Cardiac septum (tissue), 1 donor: ENCODE measurements at regions of chr9 and their contacts with region 1.

Region 1: GRCh38 chr9:35553670-35554543 is 51.2 kb upstream of the TESK1 start:
- DNase-seq: no peak

Region 2: GRCh38 chr9:35116898-35117551 is 436.9 kb before region 1 on chr9:
- intact Hi-C with region 1: loop called (anchors 10 kb)
- DNase-seq: peak; percentile 94

Region 3: GRCh38 chr9:35489313-35490154 is 64.4 kb before region 1 on chr9 and contains the start of gene RUSC2:
- intact Hi-C with region 1: loop called (anchors 2 kb)
- DNase-seq: peak; percentile 93
- total RNA-seq, gene RUSC2: 44.5 TPM

Region 4: GRCh38 chr9:35500130-35500748 is 53.7 kb before region 1 on chr9:
- intact Hi-C with region 1: no loop called
- DNase-seq: no peak

Region 5: GRCh38 chr9:35510745-35511428 is 43.0 kb before region 1 on chr9:
- intact Hi-C with region 1: loop called (anchors 5 kb)
- DNase-seq: peak; percentile 84

Region 6: DNA sequence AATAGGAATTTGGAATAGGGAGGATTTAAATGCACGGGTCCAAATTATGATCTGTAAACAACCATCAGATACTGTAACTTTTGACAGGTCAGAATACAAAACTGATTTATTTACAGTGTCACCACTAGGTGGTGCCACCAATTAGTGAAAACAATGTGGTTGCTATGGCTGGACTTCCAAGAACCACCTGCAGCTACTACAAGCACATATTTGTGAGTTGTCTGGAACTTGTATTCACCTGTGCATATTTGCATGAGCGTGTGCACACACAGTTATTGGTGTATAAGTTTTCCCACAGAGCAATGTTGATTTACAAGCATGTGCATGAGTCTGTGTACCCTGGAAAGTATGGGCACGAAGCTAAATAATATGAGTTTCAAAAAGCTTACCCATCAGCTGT is 349.1 kb after region 1 on chr9:
- intact Hi-C with region 1: no loop called
- DNase-seq: no peak